GM10248 (cell line): ENCODE measurements at regions of chr10 and their contacts with region 1.

Region 1: GRCh38 chr10:32318476-32318896 is 28.5 kb downstream of the EPC1 start:
- DNase-seq: peak; percentile 31
- CTCF ChIP-seq: no peak

Region 2: DNA sequence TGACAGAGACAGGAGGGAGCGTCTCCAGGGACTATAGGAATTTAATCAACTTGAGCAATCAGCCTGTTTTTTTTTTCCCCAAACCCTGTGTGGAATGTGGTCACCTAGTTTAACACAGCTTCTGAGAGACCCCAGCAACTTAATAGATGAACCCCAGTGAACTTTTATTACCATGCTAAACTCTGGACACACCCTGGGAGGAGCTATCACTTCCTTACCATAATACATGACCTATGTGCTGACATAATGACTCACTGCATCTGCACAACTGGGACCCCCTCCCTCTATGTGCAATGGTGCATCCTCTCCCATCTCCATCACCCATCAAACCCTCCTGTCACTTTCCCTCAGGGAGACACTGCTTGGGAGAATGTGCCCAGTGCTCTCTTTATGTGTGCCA is 55.2 kb before region 1 on chr10:
- CTCF ChIA-PET with region 1: no interaction called
- POLR2A ChIA-PET with region 1: no interaction called
- DNase-seq: no peak
- CTCF ChIP-seq: no peak

Region 3: DNA sequence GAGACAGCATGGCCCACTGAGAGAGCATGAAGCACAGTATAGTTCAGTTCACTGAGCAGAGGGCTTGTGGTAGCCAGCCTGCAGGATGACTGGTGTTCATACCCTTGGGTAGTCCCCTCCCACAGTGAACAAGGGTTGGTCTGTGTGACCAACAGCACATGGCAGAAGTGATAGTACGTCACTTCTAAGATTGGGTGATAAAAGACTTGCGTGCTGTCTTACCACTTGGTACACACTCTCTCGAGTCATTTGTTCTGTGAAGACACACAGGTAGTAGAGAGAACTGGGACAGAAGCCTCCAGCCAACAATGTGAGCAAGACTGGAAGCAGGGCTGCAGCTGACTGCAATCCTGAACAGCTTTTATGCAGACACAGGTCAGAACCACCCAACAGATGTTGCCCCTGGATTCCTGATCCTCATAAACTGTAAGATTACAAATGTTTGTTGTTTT is 13.8 kb after region 1 on chr10:
- CTCF ChIA-PET with region 1: interaction called, 10 read pairs
- POLR2A ChIA-PET with region 1: interaction called, 4 read pairs
- DNase-seq: peak; percentile 62
- CTCF ChIP-seq: no peak

Region 4: GRCh38 chr10:32357056-32357735 is 38.7 kb after region 1 on chr10:
- CTCF ChIA-PET with region 1: no interaction called
- POLR2A ChIA-PET with region 1: no interaction called
- DNase-seq: no peak
- CTCF ChIP-seq: no peak